Naive thymus-derived CD4-positive, alpha-beta T cell (primary cell): ENCODE measurements at regions of chr9 and their contacts with region 1.

Region 1: DNA sequence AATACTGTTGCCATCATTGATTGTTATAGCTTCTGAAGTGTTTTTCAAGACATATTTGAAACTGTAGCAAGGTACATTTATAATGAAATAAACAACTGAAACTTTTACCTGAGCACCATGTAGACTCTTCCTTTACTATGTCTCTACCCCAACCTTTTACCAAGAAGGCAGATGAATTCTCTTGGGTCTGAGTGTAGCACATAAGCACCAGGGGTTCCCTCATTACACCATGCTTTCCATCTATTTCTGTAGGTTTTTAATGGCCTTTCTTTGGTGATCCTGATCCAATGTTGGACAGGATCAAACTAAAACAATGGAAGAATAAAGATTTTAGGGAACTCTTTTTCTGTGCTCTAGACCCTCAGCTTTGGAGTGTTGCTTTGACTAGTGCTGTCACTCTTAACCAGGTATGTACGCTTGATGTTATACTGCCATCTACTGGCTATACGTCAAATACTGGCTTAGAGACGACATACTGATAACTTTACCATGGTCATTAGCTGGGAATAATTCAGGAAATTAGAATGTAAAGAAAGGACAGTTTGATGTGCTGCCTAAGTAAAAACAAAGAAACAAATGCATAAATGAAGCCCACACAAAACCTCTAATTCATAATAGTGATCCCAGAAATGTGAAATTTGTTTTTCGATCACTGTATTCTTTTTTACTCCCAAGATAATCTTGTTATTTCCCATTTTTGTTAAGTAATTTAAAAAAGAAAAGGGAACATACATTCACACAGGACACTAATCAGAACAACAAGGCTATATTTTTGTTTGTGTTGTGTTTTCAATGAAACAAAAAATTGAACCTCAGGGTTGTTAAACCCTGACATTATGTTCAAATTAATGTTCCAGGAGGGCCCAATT is 30.7 kb downstream of the IFNW1 start:
- DNase-seq: peak in 7 of 9 donors; percentile 43 to 72 (median 62)
- ATAC-seq: peak; percentile 92
- H3K4me3 ChIP-seq: no peak overlapping the region
- H3K4me3 Mint-ChIP-seq: no peak overlapping the region
- H3K27ac ChIP-seq: no peak overlapping the region
- H3K27ac Mint-ChIP-seq: peak overlapping the region in 1 of 9 donors; percentile 51
- H3K4me1 ChIP-seq: no peaks in the 10 kb centered on the region
- H3K4me1 Mint-ChIP-seq: peaks cover 0 to 3% (median 0%) of the 10 kb centered on the region in 7 donors
- H3K27me3 ChIP-seq: no peaks in the 10 kb centered on the region
- H3K27me3 Mint-ChIP-seq: peaks cover 0 to 19% (median 0%) of the 10 kb centered on the region in 5 donors

Region 2: DNA sequence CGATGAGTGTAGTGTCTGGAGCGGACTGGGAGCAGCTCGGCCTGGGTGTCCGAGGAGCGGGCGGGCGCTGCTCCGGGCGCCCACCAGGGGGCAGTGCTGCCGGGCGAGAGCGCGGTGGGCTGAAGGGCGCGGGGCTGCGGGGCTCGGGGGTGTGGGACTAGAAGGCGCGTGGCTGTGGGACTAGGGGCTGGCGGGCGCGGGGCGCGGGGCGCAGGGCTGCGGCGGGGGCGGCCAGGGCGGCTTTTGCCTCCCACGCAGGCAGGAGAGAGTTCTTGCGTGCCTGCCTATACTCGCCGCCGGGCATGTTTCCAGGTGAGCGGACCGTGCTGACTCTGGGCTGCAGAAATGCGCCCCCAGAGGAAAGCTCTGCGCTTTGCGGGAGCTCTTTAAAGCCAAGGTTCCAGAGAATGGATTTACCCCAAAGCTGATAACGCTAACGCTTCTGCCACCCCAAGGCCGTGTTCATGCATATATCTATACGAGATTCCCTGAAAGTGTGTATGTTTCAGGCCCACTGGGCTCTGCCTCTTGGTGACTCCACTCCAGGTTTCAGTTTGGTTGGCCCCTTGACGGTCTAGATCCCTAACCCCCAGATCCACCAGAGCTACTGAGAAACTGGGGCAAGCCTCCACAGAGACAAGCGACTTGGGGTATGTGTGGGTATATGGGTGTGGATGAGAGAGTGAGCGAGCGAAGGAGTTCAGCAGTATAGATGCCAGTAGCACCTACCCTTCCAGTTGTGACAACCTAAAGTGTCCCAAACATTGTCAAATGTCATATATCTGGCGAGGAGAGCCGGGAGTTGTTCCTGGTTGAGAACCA is 1646.0 kb before region 1 on chr9:
- CTCF ChIA-PET with region 1: interaction called, 4 read pairs
- POLR2A ChIA-PET with region 1: no interaction called
- intact Hi-C with region 1: loop called in 1 of 2 experiments (anchors 2 kb)
- DNase-seq: peak; percentile 48 to 82 (median 73)
- ATAC-seq: peak; percentile 94
- H3K4me3 ChIP-seq: peak overlapping the region; percentile 24
- H3K4me3 Mint-ChIP-seq: peak overlapping the region; percentile 71 to 97 (median 91)
- H3K27ac ChIP-seq: no peak overlapping the region
- H3K27ac Mint-ChIP-seq: peak overlapping the region in 6 of 9 donors; percentile 28 to 87 (median 70)
- H3K4me1 ChIP-seq: peaks cover 0 to 3% of the 10 kb centered on the region in 2 donors
- H3K4me1 Mint-ChIP-seq: peaks cover 4 to 17% (median 8%) of the 10 kb centered on the region in 7 donors
- H3K27me3 ChIP-seq: no peaks in the 10 kb centered on the region
- H3K27me3 Mint-ChIP-seq: peaks cover 0 to 4% (median 0%) of the 10 kb centered on the region in 5 donors

Region 3: DNA sequence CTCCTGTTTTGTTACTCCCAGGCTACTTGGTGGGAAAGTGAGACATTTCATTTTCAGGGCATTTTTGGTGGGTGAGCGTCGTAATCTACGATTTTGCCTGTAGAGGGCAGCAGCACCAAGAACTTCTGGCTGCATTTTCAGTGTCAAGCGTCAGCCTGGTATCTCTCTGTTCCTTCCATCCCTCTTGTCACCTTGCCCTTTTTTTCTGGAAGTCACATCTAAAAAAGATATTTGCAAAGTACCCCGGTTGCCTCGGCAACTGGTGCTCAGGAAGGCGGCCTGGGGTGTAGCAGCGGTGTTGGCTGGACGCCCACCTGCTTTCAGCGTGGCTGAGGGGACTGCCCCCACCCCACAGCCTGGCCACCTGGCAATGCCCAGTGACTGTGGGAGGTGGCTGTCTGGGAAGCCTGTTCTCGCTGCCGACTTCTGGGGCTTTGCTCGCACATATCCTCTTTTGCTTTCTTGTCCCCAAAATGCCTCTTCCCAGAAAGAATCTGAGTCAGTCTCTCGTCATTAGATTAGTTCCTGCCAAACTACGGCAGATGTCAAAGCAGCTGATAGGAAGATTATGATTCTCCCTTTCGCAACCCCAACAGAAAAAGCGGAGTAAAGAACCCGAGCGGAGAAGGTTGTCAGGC is 1617.6 kb before region 1 on chr9:
- CTCF ChIA-PET with region 1: interaction called, 3 read pairs
- POLR2A ChIA-PET with region 1: no interaction called
- intact Hi-C with region 1: loop called (anchors 1 to 5 kb)
- DNase-seq: peak in 7 of 9 donors; percentile 10 to 51 (median 36)
- ATAC-seq: peak; percentile 77
- H3K4me3 ChIP-seq: peak overlapping the region; percentile 26
- H3K4me3 Mint-ChIP-seq: peak overlapping the region in 9 of 10 donors; percentile 8 to 54 (median 34)
- H3K27ac ChIP-seq: no peak overlapping the region
- H3K27ac Mint-ChIP-seq: no peak overlapping the region
- H3K4me1 ChIP-seq: no peaks in the 10 kb centered on the region
- H3K4me1 Mint-ChIP-seq: peaks cover 0 to 14% (median 11%) of the 10 kb centered on the region in 7 donors
- H3K27me3 ChIP-seq: peaks cover 0 to 4% of the 10 kb centered on the region in 2 donors
- H3K27me3 Mint-ChIP-seq: peaks cover 0 to 21% (median 10%) of the 10 kb centered on the region in 5 donors

Region 4: DNA sequence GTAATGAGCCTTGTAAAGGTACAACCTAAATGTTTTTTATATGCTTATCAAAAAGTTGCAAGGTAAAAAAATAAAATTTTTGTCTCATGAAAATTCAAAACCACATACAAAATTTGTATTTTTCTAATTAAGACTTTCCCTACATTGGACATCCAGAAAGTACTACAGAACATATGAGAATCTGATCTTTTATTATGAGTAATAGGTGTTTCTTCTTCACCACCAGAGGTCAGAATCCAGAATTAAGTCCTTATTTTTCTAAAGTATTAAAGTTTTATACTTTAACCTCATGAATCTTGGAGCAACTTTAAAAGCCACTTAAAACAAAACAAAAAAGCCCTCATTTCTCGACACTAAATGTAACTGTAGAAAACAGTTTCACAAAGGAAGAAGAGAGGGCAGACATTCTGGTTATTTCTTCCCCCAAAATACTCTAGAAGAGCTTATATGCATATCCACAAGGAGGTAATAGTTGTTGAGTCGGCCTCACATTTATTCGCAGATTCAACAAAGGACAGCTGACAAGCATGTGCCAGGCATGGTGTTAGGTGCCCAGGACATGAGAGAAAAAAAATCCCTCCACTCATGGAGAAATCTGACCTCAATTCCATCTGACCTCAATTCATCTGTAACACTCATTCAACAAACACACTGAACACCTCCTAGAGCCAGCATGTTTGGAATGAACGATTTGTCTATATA is 557.9 kb before region 1 on chr9:
- CTCF ChIA-PET with region 1: no interaction called
- POLR2A ChIA-PET with region 1: no interaction called
- intact Hi-C with region 1: loop called in 1 of 2 experiments (anchors 5 kb)
- DNase-seq: peak in 1 of 9 donors; percentile 28
- ATAC-seq: no peak
- H3K4me3 ChIP-seq: no peak overlapping the region
- H3K4me3 Mint-ChIP-seq: peak overlapping the region; percentile 27 to 84 (median 46)
- H3K27ac ChIP-seq: no peak overlapping the region
- H3K27ac Mint-ChIP-seq: peak overlapping the region; percentile 2 to 79 (median 54)
- H3K4me1 ChIP-seq: peaks cover 23 to 33% of the 10 kb centered on the region in 2 donors
- H3K4me1 Mint-ChIP-seq: peaks cover 58 to 86% (median 79%) of the 10 kb centered on the region in 7 donors
- H3K27me3 ChIP-seq: no peaks in the 10 kb centered on the region
- H3K27me3 Mint-ChIP-seq: no peaks in the 10 kb centered on the region

Region 5: GRCh38 chr9:20941174-20941690 is 169.7 kb before region 1 on chr9:
- CTCF ChIA-PET with region 1: interaction called, 18 read pairs
- POLR2A ChIA-PET with region 1: no interaction called
- intact Hi-C with region 1: loop called (anchors 1 to 2 kb)
- DNase-seq: peak; percentile 13 to 73 (median 62)
- ATAC-seq: peak; percentile 95
- H3K4me3 ChIP-seq: no peak overlapping the region
- H3K4me3 Mint-ChIP-seq: peak overlapping the region in 1 of 10 donors; percentile 20
- H3K27ac ChIP-seq: no peak overlapping the region
- H3K27ac Mint-ChIP-seq: peak overlapping the region in 3 of 9 donors; percentile 13 to 29 (median 29)
- H3K4me1 ChIP-seq: no peaks in the 10 kb centered on the region
- H3K4me1 Mint-ChIP-seq: peaks cover 0 to 8% (median 5%) of the 10 kb centered on the region in 7 donors
- H3K27me3 ChIP-seq: no peaks in the 10 kb centered on the region
- H3K27me3 Mint-ChIP-seq: no peaks in the 10 kb centered on the region

Region 6: GRCh38 chr9:21031091-21031807 is 79.7 kb before region 1 on chr9 and contains the start of gene HACD4:
- CTCF ChIA-PET with region 1: interaction called, 3 read pairs
- POLR2A ChIA-PET with region 1: no interaction called
- intact Hi-C with region 1: loop called (anchors 1 to 2 kb)
- DNase-seq: peak; percentile 53 to 76 (median 73)
- ATAC-seq: peak; percentile 87
- H3K4me3 ChIP-seq: peak within 1 kb of the TSS; percentile 62
- H3K4me3 Mint-ChIP-seq: peak within 1 kb of the TSS in 7 of 10 donors; percentile 65 to 86 (median 76)
- H3K27ac ChIP-seq: peak within 1 kb of the TSS; percentile 78
- H3K27ac Mint-ChIP-seq: peak within 1 kb of the TSS in 7 of 9 donors; percentile 71 to 88 (median 81)
- H3K4me1 ChIP-seq: peaks cover 12 to 16% of the 10 kb centered on the region in 2 donors
- H3K4me1 Mint-ChIP-seq: peaks cover 13 to 42% (median 30%) of the 10 kb centered on the region in 7 donors
- H3K27me3 ChIP-seq: no peaks in the 10 kb centered on the region
- H3K27me3 Mint-ChIP-seq: no peaks in the 10 kb centered on the region
- total RNA-seq, gene HACD4: 9.3 to 15.2 (median 13.6) TPM

Region 7: GRCh38 chr9:21096172-21096900 is 14.6 kb before region 1 on chr9:
- CTCF ChIA-PET with region 1: interaction called, 10 read pairs
- POLR2A ChIA-PET with region 1: no interaction called
- intact Hi-C with region 1: no loop called
- DNase-seq: peak in 7 of 9 donors; percentile 31 to 75 (median 68)
- ATAC-seq: peak; percentile 97
- H3K4me3 ChIP-seq: peak overlapping the region; percentile 49
- H3K4me3 Mint-ChIP-seq: peak overlapping the region; percentile 66 to 82 (median 72)
- H3K27ac ChIP-seq: peak overlapping the region; percentile 8
- H3K27ac Mint-ChIP-seq: peak overlapping the region; percentile 46 to 92 (median 83)
- H3K4me1 ChIP-seq: peaks cover 15 to 17% of the 10 kb centered on the region in 2 donors
- H3K4me1 Mint-ChIP-seq: peaks cover 25 to 44% (median 39%) of the 10 kb centered on the region in 7 donors
- H3K27me3 ChIP-seq: no peaks in the 10 kb centered on the region
- H3K27me3 Mint-ChIP-seq: no peaks in the 10 kb centered on the region